GM23248 (cell line): ENCODE measurements at regions of chr6 and their contacts with region 1.

Region 1: GRCh38 chr6:30742316-30743098 is at the start of gene FLOT1:
- DNase-seq: peak; percentile 98
- H3K4me3 ChIP-seq: peak within 1 kb of the TSS; percentile 98
- H3K27ac ChIP-seq: peak within 1 kb of the TSS; percentile 96
- H3K4me1 ChIP-seq: peaks cover 32% of the 10 kb centered on the region
- H3K27me3 ChIP-seq: no peaks in the 10 kb centered on the region
- total RNA-seq, gene FLOT1: 156 and 165 TPM in 2 replicates

Region 2: DNA sequence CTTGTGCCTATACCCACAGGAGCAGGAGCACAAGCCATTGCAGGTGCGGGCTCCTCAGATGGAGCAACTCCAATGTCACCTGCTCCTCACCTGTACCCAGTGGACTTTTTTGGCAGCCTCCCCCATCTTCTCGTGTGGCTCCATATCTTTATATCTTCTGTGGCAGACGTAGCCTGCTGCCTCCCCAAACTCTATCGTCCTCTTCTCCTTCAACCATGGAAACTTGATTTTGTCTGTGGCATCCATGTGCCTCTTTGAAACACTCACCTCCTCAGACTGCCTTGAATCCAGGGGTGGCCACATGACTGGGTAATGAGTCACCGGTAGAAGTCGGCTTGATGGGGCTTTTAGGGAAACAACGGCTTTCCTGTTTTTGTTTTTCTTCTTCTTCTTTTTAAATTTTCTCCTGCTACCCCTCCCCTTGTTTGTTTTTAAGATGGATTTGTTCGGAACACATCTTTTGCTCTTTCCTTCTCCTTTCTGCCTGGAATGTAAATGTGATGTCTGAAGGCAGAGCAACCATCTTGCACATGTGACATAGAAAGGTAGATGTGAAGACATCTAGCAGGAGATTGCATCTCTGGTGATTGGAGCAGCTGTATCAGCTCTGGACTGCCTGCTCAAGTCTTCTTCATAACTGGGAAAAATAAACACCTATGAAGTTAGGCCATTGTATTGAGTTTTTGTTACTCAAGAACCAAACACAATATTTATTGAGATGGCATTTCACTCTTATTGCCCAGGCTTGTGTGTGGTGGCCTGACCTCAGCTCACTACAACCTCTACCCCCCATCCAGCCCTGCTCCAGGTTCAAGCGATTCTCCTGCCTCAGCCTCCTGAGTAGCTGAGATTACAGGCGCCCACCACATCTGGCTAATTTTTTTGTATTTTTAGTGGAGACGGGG is 71.9 kb after region 1 on chr6:
- in situ Hi-C with region 1: loop called (anchors 10 kb)
- DNase-seq: peak; percentile 83
- H3K4me3 ChIP-seq: no peak overlapping the region
- H3K27ac ChIP-seq: peak overlapping the region; percentile 79
- H3K4me1 ChIP-seq: peaks cover 31% of the 10 kb centered on the region
- H3K27me3 ChIP-seq: no peaks in the 10 kb centered on the region

Region 3: GRCh38 chr6:31087494-31088089 is 345.1 kb after region 1 on chr6:
- in situ Hi-C with region 1: loop called (anchors 25 kb)
- DNase-seq: peak; percentile 93
- H3K4me3 ChIP-seq: peak overlapping the region; percentile 43
- H3K27ac ChIP-seq: peak overlapping the region; percentile 64
- H3K4me1 ChIP-seq: peaks cover 14% of the 10 kb centered on the region
- H3K27me3 ChIP-seq: no peaks in the 10 kb centered on the region

Region 4: DNA sequence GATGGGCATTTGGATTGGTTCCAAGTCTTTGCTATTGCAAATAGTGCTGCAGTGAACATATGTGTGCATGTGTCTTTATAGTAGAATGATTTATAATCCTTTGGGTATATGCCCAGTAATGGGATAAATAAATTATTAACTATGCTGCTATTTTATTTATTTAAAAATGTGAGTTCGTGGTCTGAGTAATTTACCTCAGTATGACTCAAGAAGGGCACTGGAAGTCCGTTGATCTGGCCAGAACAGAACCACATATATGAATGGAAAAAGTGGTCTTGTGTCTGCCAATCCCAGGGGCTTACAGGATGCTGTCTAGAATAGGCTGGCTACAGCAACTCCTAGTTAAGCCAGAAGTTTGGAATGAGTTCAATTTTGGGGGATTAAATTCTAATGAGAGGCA is 557.0 kb after region 1 on chr6:
- in situ Hi-C with region 1: no loop called
- DNase-seq: no peak
- H3K4me3 ChIP-seq: no peak overlapping the region
- H3K27ac ChIP-seq: no peak overlapping the region
- H3K4me1 ChIP-seq: no peaks in the 10 kb centered on the region
- H3K27me3 ChIP-seq: no peaks in the 10 kb centered on the region; the same call in none of the 2 replicates